Endothelial cell of umbilical vein (primary cell): ENCODE measurements at regions of chr19 and their contacts with region 1.

Region 1: GRCh38 chr19:47428177-47428894 is 9.0 kb upstream of the MEIS3 start:
- DNase-seq: peak; percentile 99
- H3K4me3 ChIP-seq: no peak overlapping the region
- H3K27ac ChIP-seq: no peak overlapping the region
- H3K4me1 ChIP-seq: peaks cover 8% of the 10 kb centered on the region
- H3K27me3 ChIP-seq: peaks cover 9 to 14% of the 10 kb centered on the region in 2 experiments
- CTCF ChIP-seq: no peak
- POLR2A ChIP-seq: no peak

Region 2: DNA sequence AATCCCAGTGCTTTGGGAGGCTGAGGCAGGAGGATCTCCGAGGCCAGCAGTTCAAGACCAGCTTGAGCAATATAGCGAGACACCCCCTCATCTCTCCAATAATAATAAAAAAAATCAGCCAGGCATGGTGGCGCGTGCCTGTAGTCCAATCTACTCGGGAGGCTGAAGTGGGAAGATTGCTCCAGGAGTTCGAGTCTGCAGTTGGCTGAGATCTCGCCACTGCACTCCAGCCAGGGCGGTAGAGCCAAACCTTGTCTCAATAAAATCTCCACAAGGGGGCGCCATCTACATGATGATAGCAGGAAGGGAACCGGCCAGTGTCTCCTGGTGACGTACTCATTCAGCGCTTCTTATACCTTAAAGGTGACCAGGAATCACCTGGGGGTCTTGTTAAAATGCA is 132.3 kb before region 1 on chr19:
- CTCF ChIA-PET with region 1: interaction called, 63 read pairs
- POLR2A ChIA-PET with region 1: no interaction called
- dilution Hi-C with region 1: no loop called
- intact Hi-C with region 1: loop called (anchors 1 kb)
- DNase-seq: peak; percentile 55
- H3K4me3 ChIP-seq: no peak overlapping the region
- H3K27ac ChIP-seq: no peak overlapping the region
- H3K4me1 ChIP-seq: no peaks in the 10 kb centered on the region
- H3K27me3 ChIP-seq: no peaks in the 10 kb centered on the region
- CTCF ChIP-seq: peak; percentile 62 to 70
- POLR2A ChIP-seq: no peak

Region 3: GRCh38 chr19:47483800-47484690 is 55.7 kb after region 1 on chr19 and contains the start of gene KPTN:
- CTCF ChIA-PET with region 1: interaction called, 8 read pairs
- POLR2A ChIA-PET with region 1: no interaction called
- dilution Hi-C with region 1: no loop called
- intact Hi-C with region 1: loop called (anchors 5 kb)
- DNase-seq: peak; percentile 91
- H3K4me3 ChIP-seq: peak within 1 kb of the TSS; percentile 71 to 77 (median 77)
- H3K27ac ChIP-seq: peak within 1 kb of the TSS; percentile 88
- H3K4me1 ChIP-seq: peaks cover 3% of the 10 kb centered on the region
- H3K27me3 ChIP-seq: no peaks in the 10 kb centered on the region
- CTCF ChIP-seq: peak; percentile 93 to 97
- POLR2A ChIP-seq: peak; percentile 75
- total RNA-seq, gene KPTN: 13.7 and 15.5 TPM in 2 replicates

Region 4: GRCh38 chr19:47598407-47599349 is 170.3 kb after region 1 on chr19:
- CTCF ChIA-PET with region 1: no interaction called
- POLR2A ChIA-PET with region 1: no interaction called
- dilution Hi-C with region 1: no loop called
- intact Hi-C with region 1: no loop called
- DNase-seq: peak; percentile 86
- H3K4me3 ChIP-seq: peak overlapping the region in 2 of 3 experiments; percentile 28 to 63
- H3K27ac ChIP-seq: peak overlapping the region; percentile 67
- H3K4me1 ChIP-seq: peaks cover 31% of the 10 kb centered on the region
- H3K27me3 ChIP-seq: no peaks in the 10 kb centered on the region
- CTCF ChIP-seq: no peak
- POLR2A ChIP-seq: no peak

Region 5: GRCh38 chr19:47707135-47707925 is 279.0 kb after region 1 on chr19:
- CTCF ChIA-PET with region 1: interaction called, 454 read pairs
- POLR2A ChIA-PET with region 1: no interaction called
- dilution Hi-C with region 1: no loop called
- intact Hi-C with region 1: no loop called
- DNase-seq: peak; percentile 68
- H3K4me3 ChIP-seq: no peak overlapping the region
- H3K27ac ChIP-seq: no peak overlapping the region
- H3K4me1 ChIP-seq: no peaks in the 10 kb centered on the region
- H3K27me3 ChIP-seq: no peaks in the 10 kb centered on the region
- CTCF ChIP-seq: peak; percentile 80 to 93
- POLR2A ChIP-seq: no peak

Region 6: GRCh38 chr19:47790398-47790814 is 362.1 kb after region 1 on chr19:
- CTCF ChIA-PET with region 1: no interaction called
- POLR2A ChIA-PET with region 1: no interaction called
- dilution Hi-C with region 1: no loop called
- intact Hi-C with region 1: loop called (anchors 5 kb)
- DNase-seq: peak; percentile 64
- H3K4me3 ChIP-seq: no peak overlapping the region
- H3K27ac ChIP-seq: no peak overlapping the region
- H3K4me1 ChIP-seq: no peaks in the 10 kb centered on the region
- H3K27me3 ChIP-seq: no peaks in the 10 kb centered on the region
- CTCF ChIP-seq: peak; percentile 75 to 90
- POLR2A ChIP-seq: no peak